ENCODE measurements at regions of chr2 and their contacts with region 1.

Region 1: DNA sequence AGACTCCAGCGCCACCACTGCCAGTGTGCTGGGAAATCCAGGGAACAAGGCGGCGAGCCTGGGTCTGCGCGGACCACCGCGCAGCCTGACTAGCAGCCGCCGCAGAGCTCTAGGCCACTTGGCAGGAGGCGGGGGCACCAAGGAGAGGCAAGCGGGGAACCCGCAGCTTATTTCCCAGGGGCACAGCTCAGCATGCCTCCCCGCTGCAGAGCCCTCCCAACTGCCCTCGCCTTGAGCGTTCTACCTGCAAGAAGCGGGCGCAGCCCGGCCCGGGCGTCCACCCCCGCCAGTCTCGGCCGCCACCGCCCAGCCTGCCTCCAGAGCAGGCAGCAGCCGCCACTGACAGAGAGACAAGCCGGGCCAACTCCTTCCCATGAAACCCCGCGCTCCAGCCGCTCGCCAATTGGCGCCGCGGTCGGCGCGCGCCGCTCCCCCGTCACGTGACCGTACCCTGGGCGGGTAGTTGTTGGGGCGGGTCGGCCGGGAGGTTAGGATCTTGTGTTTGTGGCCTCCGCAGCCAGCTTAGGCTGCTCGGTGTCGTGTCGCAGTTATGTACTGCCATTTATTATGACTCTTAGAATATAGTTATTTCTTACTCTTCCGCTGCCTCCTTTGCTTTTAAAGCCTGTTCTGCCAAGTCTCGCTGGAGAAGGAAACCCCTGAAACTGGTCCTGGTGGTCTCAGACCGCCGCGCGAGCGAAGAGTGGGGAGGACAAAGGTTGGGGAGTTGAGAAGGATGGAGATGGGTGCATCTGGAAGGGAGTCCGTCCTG is at the start of gene LNPK:
- DNase-seq: peak; percentile 83
- ATAC-seq: peak; percentile 92
- H3K4me3 Mint-ChIP-seq: peak within 1 kb of the TSS; percentile 82
- H3K27ac Mint-ChIP-seq: peak within 1 kb of the TSS; percentile 31
- H3K4me1 Mint-ChIP-seq: peaks cover 16% of the 10 kb centered on the region
- H3K27me3 Mint-ChIP-seq: no peaks in the 10 kb centered on the region
- CTCF ChIP-seq: no peak
- total RNA-seq, gene LNPK: 15.2 TPM in 2 replicates

Region 2: DNA sequence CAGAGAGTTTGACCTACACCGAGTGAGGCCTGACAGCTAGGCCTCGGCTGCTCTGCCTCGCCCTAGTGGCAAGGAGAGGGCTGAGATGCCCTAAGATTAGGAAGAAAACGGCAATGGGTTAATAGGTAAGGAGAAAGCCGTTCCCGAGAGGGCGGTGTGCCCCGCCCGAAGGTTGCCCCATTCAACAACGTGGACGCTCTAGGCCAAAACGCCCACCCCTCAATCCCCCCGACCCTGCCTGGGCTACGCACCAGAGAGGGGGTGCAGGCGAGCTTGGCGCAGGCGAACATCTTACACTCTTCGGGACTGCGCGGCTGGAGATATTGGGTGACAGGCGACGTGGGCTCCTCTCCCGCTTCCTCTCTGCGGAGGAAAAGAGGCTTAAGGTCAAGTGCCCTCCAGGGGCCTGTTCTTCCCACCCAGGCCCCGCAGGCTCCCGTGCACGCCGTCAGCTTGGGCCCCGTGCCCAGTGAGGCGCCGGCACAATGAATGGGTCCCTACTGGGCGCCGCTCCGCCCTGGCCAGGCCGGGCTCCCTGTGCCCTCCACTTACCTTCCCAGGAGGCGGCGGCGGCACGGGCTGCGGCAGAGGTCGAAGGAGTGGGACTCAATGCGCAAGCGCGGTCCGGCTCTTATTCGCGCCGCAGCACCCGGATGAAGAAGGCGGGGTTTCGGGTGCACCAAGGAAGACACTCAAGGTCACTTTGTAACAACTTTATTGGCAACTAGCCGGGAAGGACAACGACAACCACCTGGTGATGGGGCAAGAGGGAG is 820.8 kb before region 1 on chr2 and contains the start of gene ATP5MC3:
- CTCF ChIA-PET with region 1: no interaction called
- POLR2A ChIA-PET with region 1: no interaction called
- intact Hi-C with region 1: loop called (anchors 5 kb)
- DNase-seq: peak; percentile 87
- ATAC-seq: peak; percentile 89
- H3K4me3 Mint-ChIP-seq: peak within 1 kb of the TSS; percentile 94
- H3K27ac Mint-ChIP-seq: peak within 1 kb of the TSS; percentile 83
- H3K4me1 Mint-ChIP-seq: peaks cover 21% of the 10 kb centered on the region
- H3K27me3 Mint-ChIP-seq: no peaks in the 10 kb centered on the region
- CTCF ChIP-seq: no peak
- total RNA-seq, gene ATP5MC3: 147 and 163 TPM in 2 replicates

Region 3: GRCh38 chr2:176018708-176019107 is 16.6 kb after region 1 on chr2:
- CTCF ChIA-PET with region 1: no interaction called
- POLR2A ChIA-PET with region 1: no interaction called
- intact Hi-C with region 1: no loop called
- DNase-seq: no peak
- ATAC-seq: no peak
- H3K4me3 Mint-ChIP-seq: no peak overlapping the region
- H3K27ac Mint-ChIP-seq: no peak overlapping the region
- H3K4me1 Mint-ChIP-seq: no peaks in the 10 kb centered on the region
- H3K27me3 Mint-ChIP-seq: peaks cover 29% of the 10 kb centered on the region
- CTCF ChIP-seq: no peak

Region 4: GRCh38 chr2:176269319-176270099 is 267.4 kb after region 1 on chr2 and contains the start of gene MTX2:
- CTCF ChIA-PET with region 1: no interaction called
- POLR2A ChIA-PET with region 1: no interaction called
- intact Hi-C with region 1: loop called (anchors 1 kb)
- DNase-seq: peak; percentile 73
- ATAC-seq: peak; percentile 92
- H3K4me3 Mint-ChIP-seq: peak within 1 kb of the TSS; percentile 98
- H3K27ac Mint-ChIP-seq: peak within 1 kb of the TSS; percentile 87
- H3K4me1 Mint-ChIP-seq: peaks cover 29% of the 10 kb centered on the region
- H3K27me3 Mint-ChIP-seq: no peaks in the 10 kb centered on the region
- CTCF ChIP-seq: no peak
- total RNA-seq, gene MTX2: 9.7 and 10.4 TPM in 2 replicates